ENCODE measurements at regions of chr21 and their contacts with region 1.

Region 1: GRCh38 chr21:15149600-15150224 is 84.9 kb upstream of the NRIP1 start:
- DNase-seq: no peak
- H3K4me3 ChIP-seq: no peak overlapping the region
- H3K27ac ChIP-seq: no peak overlapping the region
- H3K4me1 ChIP-seq: peaks cover 0 to 3% (median 1%) of the 10 kb centered on the region in 4 experiments
- H3K27me3 ChIP-seq: no peaks in the 10 kb centered on the region

Region 2: DNA sequence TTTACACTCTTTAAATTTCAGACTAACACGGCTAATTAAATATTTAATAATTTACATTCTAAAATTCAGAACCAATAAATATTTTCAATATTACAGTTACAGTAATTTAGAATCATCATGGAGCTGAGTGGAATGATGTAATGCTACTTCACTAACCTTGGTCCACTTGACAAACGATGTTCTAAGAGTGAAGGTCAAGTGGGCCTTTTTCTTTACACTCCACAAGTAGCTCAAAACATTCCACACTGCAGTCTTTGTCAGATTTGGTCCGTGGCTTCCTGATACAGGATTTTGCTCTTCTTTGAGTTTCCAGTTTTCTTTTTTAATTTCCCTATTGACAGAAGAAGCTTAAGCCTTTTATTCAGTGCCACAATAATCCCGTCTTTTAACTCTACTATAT is 79.7 kb after region 1 on chr21:
- CTCF ChIA-PET with region 1: no interaction called
- POLR2A ChIA-PET with region 1: interaction called, 10 read pairs
- DNase-seq: no peak
- H3K4me3 ChIP-seq: no peak overlapping the region
- H3K27ac ChIP-seq: no peak overlapping the region
- H3K4me1 ChIP-seq: no peaks in the 10 kb centered on the region
- H3K27me3 ChIP-seq: no peaks in the 10 kb centered on the region

Measured in common myeloid progenitor, CD34-positive (primary cell).